ENCODE measurements at regions of chr2 and their contacts with region 1.

Region 1: DNA sequence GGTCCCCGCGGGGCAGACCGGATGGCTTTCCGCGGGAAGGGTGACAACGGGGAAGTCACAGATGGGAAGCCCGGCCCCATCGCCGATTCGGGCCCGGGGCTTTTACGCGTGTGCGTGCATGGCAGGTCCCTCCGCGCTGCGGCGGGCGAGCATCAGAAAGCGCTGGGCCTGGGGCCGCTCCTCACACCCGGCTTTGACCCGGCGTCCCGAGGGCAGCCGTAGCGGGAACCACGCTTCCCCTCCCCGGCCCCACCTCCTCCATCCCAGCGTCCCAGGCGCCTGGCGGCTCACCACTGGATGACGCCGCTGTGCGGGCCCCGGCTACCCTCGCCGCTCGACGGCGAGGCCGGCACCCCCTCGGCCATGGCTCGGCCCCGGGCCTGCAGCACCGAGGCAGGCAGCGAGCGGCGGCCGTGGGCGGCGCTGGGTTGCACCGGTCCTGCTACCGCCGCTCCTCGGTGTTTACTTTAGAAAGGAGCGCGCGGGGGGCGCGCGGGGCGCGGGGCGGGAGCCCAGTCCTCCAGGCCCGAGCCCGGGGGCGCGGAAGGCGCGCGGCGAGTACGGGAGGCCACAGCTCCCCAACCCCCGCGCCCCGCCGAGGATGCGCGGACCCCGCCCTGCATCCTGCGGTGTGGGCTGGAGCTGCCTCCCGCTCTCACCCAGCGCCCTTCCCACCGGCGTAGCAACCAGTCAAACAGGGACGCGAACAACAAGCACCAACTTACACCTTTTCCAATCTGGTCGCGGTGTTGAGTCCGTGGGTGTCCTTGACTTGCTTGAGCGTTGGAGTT is 806 bp downstream of the RFX8 start:
- DNase-seq: peak; percentile 88
- H3K4me3 Mint-ChIP-seq: peak overlapping the region; percentile 84
- H3K27ac Mint-ChIP-seq: peak overlapping the region; percentile 92
- H3K4me1 Mint-ChIP-seq: peaks cover 37% of the 10 kb centered on the region
- H3K27me3 Mint-ChIP-seq: no peaks in the 10 kb centered on the region

Region 2: GRCh38 chr2:101135412-101136296 is 338.5 kb before region 1 on chr2:
- intact Hi-C with region 1: no loop called
- DNase-seq: no peak
- H3K4me3 Mint-ChIP-seq: no peak overlapping the region
- H3K27ac Mint-ChIP-seq: no peak overlapping the region
- H3K4me1 Mint-ChIP-seq: no peaks in the 10 kb centered on the region
- H3K27me3 Mint-ChIP-seq: no peaks in the 10 kb centered on the region

Region 3: GRCh38 chr2:101341901-101342624 is 132.0 kb before region 1 on chr2:
- intact Hi-C with region 1: loop called (anchors 5 kb)
- DNase-seq: peak; percentile 91
- H3K4me3 Mint-ChIP-seq: no peak overlapping the region
- H3K27ac Mint-ChIP-seq: peak overlapping the region; percentile 52
- H3K4me1 Mint-ChIP-seq: peaks cover 26% of the 10 kb centered on the region
- H3K27me3 Mint-ChIP-seq: peaks cover 5% of the 10 kb centered on the region

Region 4: GRCh38 chr2:101419096-101419663 is 54.9 kb before region 1 on chr2:
- intact Hi-C with region 1: no loop called
- DNase-seq: peak; percentile 89
- H3K4me3 Mint-ChIP-seq: no peak overlapping the region
- H3K27ac Mint-ChIP-seq: no peak overlapping the region
- H3K4me1 Mint-ChIP-seq: no peaks in the 10 kb centered on the region
- H3K27me3 Mint-ChIP-seq: no peaks in the 10 kb centered on the region

Region 5: GRCh38 chr2:101446869-101447268 is 27.2 kb before region 1 on chr2:
- intact Hi-C with region 1: loop called (anchors 1 kb)
- DNase-seq: peak; percentile 51
- H3K4me3 Mint-ChIP-seq: no peak overlapping the region
- H3K27ac Mint-ChIP-seq: no peak overlapping the region
- H3K4me1 Mint-ChIP-seq: peaks cover 15% of the 10 kb centered on the region
- H3K27me3 Mint-ChIP-seq: no peaks in the 10 kb centered on the region

Region 6: DNA sequence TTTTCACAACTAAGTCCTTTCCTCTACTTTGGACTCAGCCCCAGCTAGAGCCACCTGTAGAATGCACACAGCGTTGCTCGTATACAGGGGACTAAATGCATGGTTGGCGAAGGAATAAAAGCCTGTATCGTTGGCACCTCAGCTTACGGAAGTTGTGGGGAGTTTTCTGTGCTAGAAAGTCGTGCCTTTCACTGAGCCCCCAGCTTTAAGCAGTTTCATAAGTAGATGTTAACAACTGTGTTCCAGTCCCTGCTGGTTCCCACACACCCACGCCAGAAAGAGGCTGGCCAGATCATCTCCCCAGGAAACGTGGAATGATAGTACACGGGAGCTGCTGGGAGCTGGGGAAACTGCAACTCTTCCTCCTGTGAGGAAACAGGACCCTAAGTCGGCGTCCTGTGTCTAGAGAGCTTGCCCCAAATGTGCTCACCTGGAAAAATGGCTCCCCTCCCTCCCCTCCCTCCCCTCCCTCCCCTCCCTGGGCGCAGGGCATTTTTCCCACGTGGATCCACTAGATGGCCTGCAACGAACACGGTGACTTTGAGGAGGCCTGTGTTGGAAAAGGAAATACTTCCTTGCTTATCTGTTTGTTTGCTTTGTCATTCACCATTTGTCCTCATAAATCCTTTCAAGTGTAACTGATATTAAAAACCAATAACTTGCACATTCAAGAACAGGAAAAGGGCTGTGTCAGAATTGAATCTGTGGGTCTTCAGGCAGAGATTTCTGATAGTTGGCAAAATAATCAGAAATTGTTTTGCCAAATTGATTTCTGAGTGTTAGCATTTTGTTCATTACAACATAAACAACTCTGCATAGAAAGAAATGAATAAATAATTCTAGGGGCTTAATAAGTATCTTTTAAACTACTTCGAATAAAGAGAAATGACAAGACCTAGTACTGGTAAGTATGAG is 44.7 kb after region 1 on chr2:
- intact Hi-C with region 1: loop called (anchors 5 kb)
- DNase-seq: peak; percentile 43
- H3K4me3 Mint-ChIP-seq: no peak overlapping the region
- H3K27ac Mint-ChIP-seq: no peak overlapping the region
- H3K4me1 Mint-ChIP-seq: peaks cover 38% of the 10 kb centered on the region
- H3K27me3 Mint-ChIP-seq: no peaks in the 10 kb centered on the region

Region 7: DNA sequence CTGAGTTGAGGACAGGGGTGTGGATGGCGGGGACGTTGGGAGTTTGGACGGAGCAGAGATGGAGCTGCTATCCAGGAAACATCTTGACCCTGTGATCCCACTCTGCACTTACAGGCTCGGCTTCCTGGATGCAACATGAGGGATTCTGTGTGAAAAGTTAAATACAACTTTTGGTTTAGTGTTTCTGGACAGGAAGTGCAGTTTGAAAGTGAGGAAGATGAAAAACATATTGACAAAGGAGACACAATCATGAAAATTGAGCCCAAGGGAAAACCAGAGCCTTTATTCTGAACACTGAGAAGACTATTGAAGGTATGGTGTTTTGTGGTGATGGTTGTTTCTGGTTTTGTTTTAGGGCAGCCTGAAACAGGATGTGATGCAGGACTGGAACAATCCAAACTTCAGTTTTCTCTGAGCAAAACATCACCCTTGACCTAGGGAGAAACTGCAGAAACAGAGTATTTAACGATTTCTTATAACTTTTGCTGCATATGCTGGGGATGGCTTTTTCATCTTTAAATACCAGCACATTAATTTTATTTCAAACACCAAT is 77.3 kb after region 1 on chr2:
- intact Hi-C with region 1: loop called (anchors 5 kb)
- DNase-seq: peak; percentile 62
- H3K4me3 Mint-ChIP-seq: peak overlapping the region; percentile 15
- H3K27ac Mint-ChIP-seq: peak overlapping the region; percentile 70
- H3K4me1 Mint-ChIP-seq: peaks cover 20% of the 10 kb centered on the region
- H3K27me3 Mint-ChIP-seq: no peaks in the 10 kb centered on the region

Region 8: GRCh38 chr2:101655702-101656422 is 181.8 kb after region 1 on chr2:
- intact Hi-C with region 1: loop called (anchors 2 kb)
- DNase-seq: no peak
- H3K4me3 Mint-ChIP-seq: no peak overlapping the region
- H3K27ac Mint-ChIP-seq: no peak overlapping the region
- H3K4me1 Mint-ChIP-seq: peaks cover 21% of the 10 kb centered on the region
- H3K27me3 Mint-ChIP-seq: no peaks in the 10 kb centered on the region

Region 9: DNA sequence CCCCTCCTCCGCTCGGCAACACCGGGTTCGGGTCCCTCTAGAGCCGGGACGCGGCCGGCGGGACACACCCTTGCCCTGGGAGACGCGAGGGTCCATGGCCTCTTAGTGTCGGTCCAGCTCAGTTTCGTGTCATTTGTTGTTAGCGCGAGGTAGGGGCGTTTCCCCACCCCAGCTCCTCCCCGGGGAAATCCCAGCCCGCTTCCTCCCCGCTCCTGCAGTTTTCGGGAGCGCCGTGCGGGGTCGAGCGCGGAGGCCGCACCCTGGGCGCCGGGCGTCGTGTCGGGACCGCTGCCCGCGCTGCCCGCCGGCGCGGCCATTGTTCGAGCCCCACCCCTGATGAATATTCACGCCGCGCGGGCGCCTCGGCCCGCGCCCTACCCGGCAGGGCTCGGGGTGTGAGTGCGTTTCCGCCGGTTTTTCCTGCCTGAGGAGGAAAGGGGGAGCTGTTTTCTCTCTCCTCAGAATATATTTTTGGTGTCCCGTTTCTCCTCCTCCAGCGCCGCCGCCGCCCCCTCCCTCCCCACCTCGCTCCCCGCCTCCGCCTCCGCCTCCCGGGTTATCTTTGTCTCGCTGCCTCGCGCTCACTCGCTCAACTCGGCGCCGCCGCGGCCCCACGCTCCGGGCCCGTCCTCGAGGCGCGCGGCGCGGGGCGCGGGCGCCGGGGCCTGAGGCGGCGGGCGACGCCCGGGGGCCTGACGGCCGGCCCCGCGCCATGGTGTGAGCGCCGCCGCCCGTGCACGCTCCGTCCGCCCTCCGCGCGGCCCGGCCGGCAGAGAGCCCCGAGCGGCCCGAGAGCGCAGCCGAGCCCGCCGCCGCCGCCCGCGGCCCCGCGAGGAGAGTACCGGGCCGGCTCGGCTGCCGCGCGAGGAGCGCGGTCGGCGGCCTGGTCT is 223.3 kb after region 1 on chr2 and contains the start of gene MAP4K4:
- intact Hi-C with region 1: loop called (anchors 2 kb)
- DNase-seq: peak; percentile 91
- H3K4me3 Mint-ChIP-seq: peak within 1 kb of the TSS; percentile 85
- H3K27ac Mint-ChIP-seq: peak within 1 kb of the TSS; percentile 88
- H3K4me1 Mint-ChIP-seq: peaks cover 22% of the 10 kb centered on the region
- H3K27me3 Mint-ChIP-seq: no peaks in the 10 kb centered on the region
- total RNA-seq, gene MAP4K4: 41.2 and 42.6 TPM in 2 replicates